Activated naive CD4-positive, alpha-beta T cell treated with anti-CD3 and anti-CD28 coated beads for 36 hours (primary cell): ENCODE measurements at regions of chr19 and their contacts with region 1.

Region 1: GRCh38 chr19:32570081-32570785 is 10.8 kb upstream of the PDCD5 start:
- DNase-seq: peak; percentile 76
- H3K4me3 Mint-ChIP-seq: no peak overlapping the region
- H3K27ac Mint-ChIP-seq: no peak overlapping the region
- H3K4me1 Mint-ChIP-seq: peaks cover 16% of the 10 kb centered on the region
- H3K27me3 Mint-ChIP-seq: peaks cover 14% of the 10 kb centered on the region

Region 2: GRCh38 chr19:32265995-32266394 is 304.2 kb before region 1 on chr19:
- CTCF ChIA-PET with region 1: no interaction called
- intact Hi-C with region 1: no loop called
- DNase-seq: no peak
- H3K4me3 Mint-ChIP-seq: no peak overlapping the region
- H3K27ac Mint-ChIP-seq: no peak overlapping the region
- H3K4me1 Mint-ChIP-seq: no peaks in the 10 kb centered on the region
- H3K27me3 Mint-ChIP-seq: peaks cover 10% of the 10 kb centered on the region

Region 3: GRCh38 chr19:32287811-32288227 is 282.4 kb before region 1 on chr19:
- CTCF ChIA-PET with region 1: interaction called, 5 read pairs
- intact Hi-C with region 1: loop called (anchors 1 kb)
- DNase-seq: peak; percentile 52
- H3K4me3 Mint-ChIP-seq: no peak overlapping the region
- H3K27ac Mint-ChIP-seq: no peak overlapping the region
- H3K4me1 Mint-ChIP-seq: no peaks in the 10 kb centered on the region
- H3K27me3 Mint-ChIP-seq: peaks cover 18% of the 10 kb centered on the region

Region 4: GRCh38 chr19:32339988-32340874 is 230.0 kb before region 1 on chr19:
- CTCF ChIA-PET with region 1: interaction called, 4 read pairs
- intact Hi-C with region 1: loop called (anchors 1 kb)
- DNase-seq: peak; percentile 65
- H3K4me3 Mint-ChIP-seq: no peak overlapping the region
- H3K27ac Mint-ChIP-seq: no peak overlapping the region
- H3K4me1 Mint-ChIP-seq: no peaks in the 10 kb centered on the region
- H3K27me3 Mint-ChIP-seq: no peaks in the 10 kb centered on the region

Region 5: DNA sequence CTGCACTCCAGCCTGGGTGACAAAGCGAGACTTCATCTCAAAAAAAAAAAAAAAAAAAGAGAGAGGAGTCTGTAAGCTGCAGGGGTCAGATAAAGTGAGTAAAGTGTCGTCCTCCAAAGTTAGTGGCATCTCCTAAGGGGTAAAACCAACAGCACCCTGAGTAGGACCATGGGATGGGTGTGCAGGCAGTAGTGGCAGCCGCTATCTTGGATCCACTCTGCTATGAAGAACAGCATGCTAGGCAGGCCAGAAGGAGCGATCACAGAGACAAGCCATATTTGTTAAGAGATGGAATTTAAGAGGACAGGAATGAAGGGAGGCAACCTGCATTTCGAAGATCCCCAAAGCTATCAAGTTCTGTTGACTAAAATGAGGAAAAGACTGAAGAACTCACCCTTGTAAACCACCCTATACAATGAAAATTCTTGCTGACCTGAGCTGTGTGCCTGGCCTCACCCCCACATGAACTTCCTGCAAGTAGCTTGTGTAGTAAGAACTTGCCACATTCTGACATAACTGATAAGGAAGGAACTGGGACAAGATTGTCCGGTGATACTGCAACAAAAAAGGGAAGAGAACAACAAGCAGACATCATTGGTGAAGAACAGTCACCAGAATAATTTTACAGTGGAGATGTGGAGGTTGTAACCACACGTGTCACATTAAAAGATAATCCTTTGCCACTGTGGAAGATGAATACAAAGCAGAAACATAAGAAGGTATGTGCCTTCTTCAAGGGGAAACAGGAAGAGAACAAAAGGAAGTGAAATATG is 148.5 kb before region 1 on chr19:
- CTCF ChIA-PET with region 1: no interaction called
- intact Hi-C with region 1: no loop called
- DNase-seq: no peak
- H3K4me3 Mint-ChIP-seq: no peak overlapping the region
- H3K27ac Mint-ChIP-seq: no peak overlapping the region
- H3K4me1 Mint-ChIP-seq: peaks cover 12% of the 10 kb centered on the region
- H3K27me3 Mint-ChIP-seq: no peaks in the 10 kb centered on the region

Region 6: DNA sequence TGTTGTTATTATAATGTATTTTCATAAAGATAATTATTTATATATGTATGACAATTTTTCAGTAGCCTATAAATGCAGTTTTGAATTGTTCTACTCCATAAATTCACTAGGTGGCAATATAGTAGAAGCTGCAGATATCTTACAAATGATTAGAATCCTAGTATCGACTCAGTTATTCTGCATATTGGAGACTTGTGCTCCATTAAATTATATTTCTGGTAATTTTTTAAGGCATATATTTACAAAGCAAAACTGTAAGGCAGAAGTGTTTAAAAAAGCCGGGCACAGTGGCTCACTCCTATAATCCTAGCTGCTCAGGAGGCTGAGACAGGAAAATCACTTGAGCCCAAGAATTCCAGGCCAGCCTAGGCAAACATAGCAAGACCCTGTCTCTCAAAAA is 106.0 kb before region 1 on chr19:
- CTCF ChIA-PET with region 1: no interaction called
- intact Hi-C with region 1: loop called (anchors 1 kb)
- DNase-seq: no peak
- H3K4me3 Mint-ChIP-seq: no peak overlapping the region
- H3K27ac Mint-ChIP-seq: no peak overlapping the region
- H3K4me1 Mint-ChIP-seq: no peaks in the 10 kb centered on the region
- H3K27me3 Mint-ChIP-seq: no peaks in the 10 kb centered on the region

Region 7: DNA sequence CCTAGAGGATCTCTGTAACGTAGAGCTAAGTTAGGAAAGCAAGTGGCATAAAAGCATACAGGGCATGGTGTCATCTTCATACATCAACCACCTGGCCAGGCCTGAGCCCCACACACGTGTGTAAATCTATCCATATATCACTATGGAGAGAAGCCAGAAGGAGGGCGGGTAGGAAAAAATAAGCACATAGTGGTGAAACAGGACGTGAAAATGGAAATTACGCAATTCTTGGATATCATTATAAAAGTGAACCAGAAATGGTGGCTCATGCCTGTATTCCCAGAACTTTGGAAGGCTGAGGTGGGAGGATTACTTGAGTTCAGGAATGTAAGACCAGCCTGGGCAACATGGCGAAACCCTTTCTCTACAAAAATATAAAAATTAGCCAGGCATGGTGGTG is 54.2 kb after region 1 on chr19:
- CTCF ChIA-PET with region 1: no interaction called
- intact Hi-C with region 1: no loop called
- DNase-seq: no peak
- H3K4me3 Mint-ChIP-seq: no peak overlapping the region
- H3K27ac Mint-ChIP-seq: no peak overlapping the region
- H3K4me1 Mint-ChIP-seq: no peaks in the 10 kb centered on the region
- H3K27me3 Mint-ChIP-seq: no peaks in the 10 kb centered on the region

Region 8: DNA sequence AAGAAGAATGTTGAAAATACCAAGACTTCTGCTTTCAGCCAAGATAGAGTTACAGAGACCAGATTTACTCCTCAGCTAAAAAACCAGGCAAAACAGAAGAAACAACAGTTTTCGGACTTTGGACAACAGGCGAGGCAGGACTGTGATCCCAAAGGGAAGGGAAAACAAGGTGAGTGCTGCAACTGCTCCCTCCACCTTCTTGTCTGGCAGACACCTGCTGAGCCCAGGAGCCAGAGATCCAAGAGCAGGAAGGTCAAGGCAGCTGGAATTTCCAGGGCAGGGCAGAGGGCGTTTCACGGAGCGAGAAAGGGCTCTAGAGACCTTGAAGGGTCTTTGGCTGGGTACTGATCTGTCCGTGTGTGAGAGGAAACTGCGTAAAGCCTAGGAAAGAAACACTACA is 332.2 kb after region 1 on chr19:
- CTCF ChIA-PET with region 1: no interaction called
- intact Hi-C with region 1: no loop called
- DNase-seq: no peak
- H3K4me3 Mint-ChIP-seq: no peak overlapping the region
- H3K27ac Mint-ChIP-seq: no peak overlapping the region
- H3K4me1 Mint-ChIP-seq: no peaks in the 10 kb centered on the region
- H3K27me3 Mint-ChIP-seq: no peaks in the 10 kb centered on the region